ENCODE measurements at regions of chr16 and their contacts with region 1.

Region 1: GRCh38 chr16:58129097-58129936 is at the start of gene CFAP20:
- DNase-seq: peak; percentile 96
- H3K4me3 Mint-ChIP-seq: peak within 1 kb of the TSS; percentile 84
- H3K27ac Mint-ChIP-seq: peak within 1 kb of the TSS; percentile 83
- H3K4me1 Mint-ChIP-seq: peaks cover 32% of the 10 kb centered on the region
- H3K27me3 Mint-ChIP-seq: no peaks in the 10 kb centered on the region
- total RNA-seq, gene CFAP20: 64.9 and 65.2 TPM in 2 replicates

Region 2: DNA sequence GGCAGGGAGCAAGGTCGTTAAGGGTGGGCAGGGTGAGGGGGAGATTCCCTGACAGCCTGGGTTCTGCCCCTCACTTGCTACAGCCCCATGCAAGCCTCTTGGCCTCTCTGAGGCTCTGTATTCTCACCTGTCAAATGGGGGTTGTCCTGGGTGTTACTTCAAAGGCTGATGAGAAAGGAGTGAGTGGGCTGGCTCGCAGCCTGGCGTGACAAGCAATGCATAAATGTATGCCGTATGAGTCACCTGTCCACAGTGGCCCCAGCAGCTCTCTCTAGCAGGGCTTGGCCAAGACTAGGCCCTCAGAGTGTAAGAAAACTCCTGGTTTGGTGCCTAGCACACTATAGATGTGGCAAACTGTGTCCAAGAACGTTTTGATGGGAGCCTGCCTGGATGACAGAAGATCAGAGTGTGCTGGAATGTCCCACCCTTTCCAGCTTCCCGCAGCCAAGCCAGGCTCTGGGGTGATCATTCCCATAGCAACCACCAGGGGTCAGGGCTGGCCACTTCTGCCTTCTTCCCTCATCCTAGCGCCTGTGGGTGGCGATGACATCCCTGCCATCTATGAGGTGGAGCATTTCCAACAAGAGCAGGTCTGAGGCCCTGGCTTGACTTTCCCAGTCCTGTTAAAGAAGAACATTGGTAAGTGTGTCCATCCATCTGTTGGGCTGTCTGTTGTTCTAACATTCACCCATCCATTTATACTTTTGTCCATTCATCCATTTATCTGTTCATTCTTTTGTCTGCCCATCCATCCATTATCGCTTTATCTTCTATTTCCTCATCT is 538.0 kb before region 1 on chr16:
- intact Hi-C with region 1: loop called (anchors 5 kb)
- DNase-seq: peak; percentile 56
- H3K4me3 Mint-ChIP-seq: peak overlapping the region; percentile 63
- H3K27ac Mint-ChIP-seq: peak overlapping the region; percentile 85
- H3K4me1 Mint-ChIP-seq: peaks cover 55% of the 10 kb centered on the region
- H3K27me3 Mint-ChIP-seq: peaks cover 2% of the 10 kb centered on the region

Region 3: GRCh38 chr16:58000706-58001676 is 128.3 kb before region 1 on chr16 and contains the start of gene USB1:
- intact Hi-C with region 1: loop called (anchors 1 kb)
- DNase-seq: peak; percentile 83
- H3K4me3 Mint-ChIP-seq: peak within 1 kb of the TSS; percentile 91
- H3K27ac Mint-ChIP-seq: peak within 1 kb of the TSS; percentile 91
- H3K4me1 Mint-ChIP-seq: peaks cover 45% of the 10 kb centered on the region
- H3K27me3 Mint-ChIP-seq: no peaks in the 10 kb centered on the region
- total RNA-seq, gene USB1: 60.8 and 63.0 TPM in 2 replicates

Region 4: DNA sequence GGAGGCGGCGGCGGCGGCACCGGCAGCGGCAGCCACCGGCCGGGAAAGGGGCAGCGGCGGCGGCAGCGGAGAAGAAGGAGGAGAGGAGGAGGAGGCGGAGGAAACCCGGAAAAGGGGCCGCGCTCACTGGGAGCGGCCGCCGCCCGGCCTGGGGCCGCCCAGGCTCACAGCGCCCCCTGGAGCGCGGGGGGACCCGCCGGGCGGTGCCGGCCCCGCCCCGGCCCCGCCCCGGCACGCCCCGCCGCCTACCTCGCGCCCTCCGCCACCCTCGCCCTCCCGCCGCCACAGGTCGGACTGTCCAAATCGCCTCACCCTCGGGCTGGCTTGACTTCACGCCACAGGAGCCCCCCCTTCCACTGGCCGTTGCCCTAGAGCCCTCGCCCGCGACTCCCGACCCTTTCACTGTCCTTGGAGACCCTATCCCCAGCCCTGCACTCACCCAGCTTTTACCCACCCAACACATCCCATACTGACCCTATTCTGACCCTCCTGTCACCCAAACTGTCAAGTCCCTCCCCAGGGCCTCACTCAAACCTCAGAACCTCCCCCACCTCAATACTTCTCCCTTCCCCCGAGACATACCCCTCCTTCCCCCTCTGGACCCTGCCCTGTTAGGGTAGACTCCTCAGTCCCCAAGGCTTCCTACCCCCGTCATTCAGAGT is 68.8 kb after region 1 on chr16 and contains the start of gene CSNK2A2:
- intact Hi-C with region 1: loop called (anchors 1 kb)
- DNase-seq: peak; percentile 58
- H3K4me3 Mint-ChIP-seq: peak within 1 kb of the TSS; percentile 92
- H3K27ac Mint-ChIP-seq: peak within 1 kb of the TSS; percentile 79
- H3K4me1 Mint-ChIP-seq: peaks cover 34% of the 10 kb centered on the region
- H3K27me3 Mint-ChIP-seq: peaks cover 6% of the 10 kb centered on the region
- total RNA-seq, gene CSNK2A2: 93.1 and 99.6 TPM in 2 replicates

Region 5: DNA sequence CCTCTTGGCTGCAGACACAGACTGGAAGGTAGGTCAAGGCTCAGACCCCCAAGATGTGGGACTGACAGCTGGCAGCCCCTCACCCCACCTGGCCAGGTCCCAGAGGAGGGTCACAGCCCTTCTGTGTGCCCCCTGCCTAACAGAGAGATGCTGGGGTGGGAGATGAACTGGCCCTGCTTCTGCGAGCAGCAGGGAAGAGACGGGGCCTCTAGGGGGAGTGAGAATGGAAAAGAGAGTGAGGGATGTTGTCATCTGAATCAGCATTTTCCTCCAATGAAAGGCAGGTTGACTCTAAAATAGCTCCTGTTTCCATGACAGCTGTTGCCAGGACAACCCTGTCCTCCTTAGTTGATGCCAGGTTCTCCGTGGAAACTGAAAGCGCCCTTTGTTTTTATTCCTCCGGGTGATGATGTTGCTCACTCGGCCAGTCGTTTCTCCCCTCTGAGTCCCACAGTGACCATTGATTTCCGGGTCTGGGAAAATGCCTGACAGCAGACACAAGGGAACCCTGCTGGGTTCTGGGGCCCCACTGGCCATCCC is 365.7 kb after region 1 on chr16:
- intact Hi-C with region 1: loop called (anchors 5 kb)
- DNase-seq: peak; percentile 65
- H3K4me3 Mint-ChIP-seq: no peak overlapping the region
- H3K27ac Mint-ChIP-seq: peak overlapping the region; percentile 87
- H3K4me1 Mint-ChIP-seq: peaks cover 9% of the 10 kb centered on the region
- H3K27me3 Mint-ChIP-seq: peaks cover 1% of the 10 kb centered on the region

Region 6: DNA sequence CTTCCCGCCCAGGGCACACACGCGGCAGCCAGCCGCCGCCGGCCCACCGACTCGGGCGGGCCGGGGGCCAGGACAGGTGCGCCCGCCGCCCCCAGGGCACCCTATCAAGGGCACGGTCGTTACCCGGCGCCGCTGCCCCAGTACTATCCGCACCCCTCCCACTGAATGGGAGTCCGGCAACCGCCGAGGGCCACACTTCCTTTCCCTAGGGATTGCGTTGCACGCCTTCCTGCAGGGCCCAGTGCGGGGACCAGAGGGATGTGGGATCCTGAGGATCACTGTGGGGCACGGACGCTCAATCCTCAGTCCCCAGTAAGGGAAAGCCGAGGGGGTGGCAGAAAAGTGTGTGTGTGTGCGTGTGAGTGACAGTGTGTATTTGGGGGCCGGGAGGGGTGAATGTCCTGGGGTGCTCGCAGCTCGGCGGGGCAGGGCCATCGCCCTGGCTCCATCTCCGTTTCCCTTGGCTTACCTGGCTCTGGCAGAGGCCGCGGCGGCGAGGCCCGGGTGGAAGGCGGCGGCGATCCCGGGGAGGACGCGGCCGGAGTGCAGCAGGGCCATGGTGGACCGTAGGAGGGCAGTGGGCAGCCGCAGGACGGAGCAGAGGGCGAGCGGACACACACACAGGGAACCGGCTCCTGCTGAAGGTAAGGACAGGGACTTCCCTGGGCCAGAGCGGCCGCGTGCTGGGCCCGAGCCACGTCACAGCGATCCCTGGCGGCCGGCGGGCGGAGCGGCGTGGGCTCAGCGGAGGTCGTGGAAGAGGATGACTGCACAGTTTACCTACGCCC is 604.5 kb after region 1 on chr16 and contains the start of gene GOT2:
- intact Hi-C with region 1: loop called (anchors 5 kb)
- DNase-seq: peak; percentile 78
- H3K4me3 Mint-ChIP-seq: peak within 1 kb of the TSS; percentile 100
- H3K27ac Mint-ChIP-seq: peak within 1 kb of the TSS; percentile 99
- H3K4me1 Mint-ChIP-seq: peaks cover 27% of the 10 kb centered on the region
- H3K27me3 Mint-ChIP-seq: no peaks in the 10 kb centered on the region
- total RNA-seq, gene GOT2: 135 and 137 TPM in 2 replicates